Activated naive CD4-positive, alpha-beta T cell treated with anti-CD3 and anti-CD28 coated beads for 36 hours (primary cell): ENCODE measurements at regions of chr21 and their contacts with region 1.

Region 1: DNA sequence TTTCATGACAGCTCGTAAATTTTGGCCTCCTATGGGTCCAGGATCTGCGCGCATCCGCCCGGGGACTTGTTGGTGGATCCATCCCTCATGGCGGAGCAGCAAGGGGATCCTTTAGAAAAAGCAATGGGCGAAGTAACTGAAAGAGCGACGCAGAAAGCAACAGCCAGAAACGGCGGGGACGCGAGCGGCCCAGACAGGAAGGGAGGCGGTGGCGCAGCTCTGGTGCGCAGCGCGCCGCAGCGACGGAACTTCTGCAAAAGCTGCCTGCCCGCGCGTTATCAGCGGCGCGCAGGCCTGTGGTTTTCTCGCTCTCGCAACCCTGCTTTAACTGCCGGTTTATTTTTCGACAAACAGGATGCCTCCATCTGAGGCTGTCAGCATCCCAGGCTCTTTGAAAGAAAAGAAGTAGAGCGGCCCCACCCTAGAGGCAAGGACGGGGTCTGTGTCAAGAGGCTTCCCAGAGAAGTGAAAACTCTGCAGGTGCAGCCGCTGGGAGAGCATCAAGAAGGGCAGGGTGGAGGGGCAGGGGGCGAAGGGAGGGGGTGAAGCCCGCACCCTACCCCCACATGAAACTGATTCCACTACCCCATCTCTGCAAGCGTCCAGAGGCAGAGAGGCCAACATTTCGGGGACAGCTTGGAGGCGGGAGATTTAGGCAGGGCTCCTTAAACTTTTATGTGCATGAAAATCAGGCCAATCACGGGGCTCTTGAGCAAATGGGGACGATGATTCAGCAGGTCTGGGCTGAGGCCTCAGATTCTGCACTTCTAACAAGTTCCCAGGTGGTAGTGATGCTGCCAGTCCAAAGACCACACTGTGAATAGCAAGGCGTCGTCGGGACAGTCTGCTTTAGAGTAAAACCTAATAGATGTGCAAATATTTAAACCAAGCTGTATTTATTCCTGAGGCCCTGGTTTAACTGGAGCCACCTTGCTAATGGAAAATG is 22.2 kb downstream of the RUNX1 start:
- DNase-seq: peak; percentile 88
- H3K4me3 Mint-ChIP-seq: peak overlapping the region; percentile 83
- H3K27ac Mint-ChIP-seq: peak overlapping the region; percentile 95
- H3K4me1 Mint-ChIP-seq: peaks cover 86% of the 10 kb centered on the region
- H3K27me3 Mint-ChIP-seq: no peaks in the 10 kb centered on the region

Region 2: DNA sequence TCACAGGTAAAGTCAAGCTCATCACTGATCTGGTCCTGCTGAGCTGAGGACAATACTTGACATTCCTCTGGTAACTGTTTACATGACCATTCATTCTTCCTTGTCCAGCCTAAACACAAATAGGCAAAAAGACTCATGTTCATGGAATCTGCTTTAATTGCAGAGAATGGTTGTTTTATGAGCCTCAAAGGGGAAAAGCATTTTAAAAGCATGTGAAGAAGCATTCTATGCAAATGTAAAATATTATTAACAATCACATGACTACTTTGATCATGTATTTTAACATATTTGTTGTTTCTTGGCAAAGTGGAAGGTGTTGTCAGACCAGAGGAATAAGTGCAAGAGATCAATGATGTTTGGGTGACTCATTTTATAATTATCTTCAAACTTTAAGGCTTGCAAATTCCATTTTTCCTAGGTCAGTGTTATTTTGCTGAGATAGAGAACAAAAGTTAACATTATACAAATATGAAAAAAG is 111.5 kb before region 1 on chr21:
- CTCF ChIA-PET with region 1: no interaction called
- intact Hi-C with region 1: no loop called
- DNase-seq: no peak
- H3K4me3 Mint-ChIP-seq: no peak overlapping the region
- H3K27ac Mint-ChIP-seq: no peak overlapping the region
- H3K4me1 Mint-ChIP-seq: peaks cover 55% of the 10 kb centered on the region
- H3K27me3 Mint-ChIP-seq: no peaks in the 10 kb centered on the region

Region 3: GRCh38 chr21:35045542-35046262 is 18.8 kb after region 1 on chr21:
- CTCF ChIA-PET with region 1: interaction called, 7 read pairs
- intact Hi-C with region 1: loop called (anchors 1 kb)
- DNase-seq: peak; percentile 59
- H3K4me3 Mint-ChIP-seq: peak overlapping the region; percentile 86
- H3K27ac Mint-ChIP-seq: peak overlapping the region; percentile 97
- H3K4me1 Mint-ChIP-seq: peaks cover 81% of the 10 kb centered on the region
- H3K27me3 Mint-ChIP-seq: no peaks in the 10 kb centered on the region